ENCODE measurements at regions of chr11 and their contacts with region 1.

Region 1: DNA sequence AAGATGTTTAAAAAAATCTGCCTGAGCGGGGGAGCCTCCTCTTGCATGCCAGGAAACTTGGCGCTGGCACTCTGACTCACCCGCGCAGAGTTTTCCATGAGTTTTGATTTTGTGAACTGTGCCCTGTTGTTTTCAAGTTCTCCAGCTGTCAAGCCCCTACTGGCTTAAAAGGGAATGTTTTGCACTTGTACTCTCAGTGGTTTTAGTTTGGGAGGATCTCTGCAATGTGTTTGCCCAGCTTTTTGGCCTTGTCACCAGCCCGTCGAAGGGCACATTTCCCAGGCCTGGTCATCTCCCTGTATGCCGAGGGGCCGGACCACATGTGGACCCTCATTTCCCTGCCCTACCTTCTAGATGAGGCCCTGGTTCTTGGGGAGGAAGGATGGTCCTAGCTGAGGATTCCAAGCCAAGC is 12.2 kb downstream of the MRGPRF start:
- DNase-seq: peak; percentile 91

Region 2: GRCh38 chr11:68903288-68904247 is 97.3 kb before region 1 on chr11 and contains the starts of genes IGHMBP2 and MRPL21:
- intact Hi-C with region 1: loop called in 1 of 2 experiments (anchors 5 kb)
- DNase-seq: peak; percentile 97
- total RNA-seq, gene IGHMBP2: 18.3 to 18.4 TPM
- total RNA-seq, gene MRPL21: 44.9 to 47.5 TPM

Region 3: DNA sequence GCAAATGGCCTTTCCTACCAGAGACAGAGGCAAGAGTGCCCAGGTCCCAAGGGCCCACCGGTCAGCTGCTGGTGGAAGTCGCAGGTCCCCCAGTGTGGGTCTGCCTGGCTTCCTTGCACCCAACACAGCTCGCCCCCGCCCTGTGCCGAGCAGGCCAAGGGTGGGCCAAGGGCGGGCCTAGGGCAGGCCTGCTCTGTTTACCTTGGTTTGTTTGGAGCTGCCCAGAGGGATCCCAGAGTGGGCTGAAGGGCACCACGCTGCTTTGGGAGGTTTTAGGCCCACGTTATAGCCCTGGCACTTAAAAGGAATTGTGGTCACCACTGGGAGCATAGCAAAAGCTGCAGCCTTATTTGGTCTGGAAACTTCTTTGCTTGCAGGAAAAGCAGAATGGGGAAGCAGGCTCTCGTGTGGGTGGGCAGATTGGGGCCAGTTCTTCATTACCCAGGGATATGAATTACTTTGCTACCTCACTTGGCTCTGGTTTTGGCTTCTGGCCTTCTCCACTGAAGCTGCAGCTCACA is 58.0 kb before region 1 on chr11:
- intact Hi-C with region 1: loop called in 1 of 2 experiments (anchors 5 kb)
- DNase-seq: no peak

Region 4: DNA sequence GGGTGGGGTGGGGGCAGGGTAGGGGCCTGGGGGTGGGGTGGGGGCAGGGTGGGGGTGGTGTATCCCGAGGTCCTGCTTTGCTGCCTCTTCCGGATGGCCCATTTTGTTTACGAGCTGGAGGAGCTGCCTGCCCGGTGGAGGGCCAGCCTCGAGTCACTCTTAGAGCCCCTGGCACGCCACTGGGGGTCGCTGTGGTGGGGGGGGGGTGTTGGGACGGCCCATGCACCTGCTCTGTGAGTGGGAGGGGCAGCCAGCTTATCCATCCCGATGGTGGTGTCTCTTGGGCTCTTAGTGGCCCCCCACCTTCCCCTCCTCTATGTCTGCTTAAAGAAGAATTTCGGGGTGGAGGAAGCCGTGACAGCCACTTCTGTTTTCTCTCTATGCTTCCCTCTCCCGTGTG is 44.7 kb before region 1 on chr11:
- intact Hi-C with region 1: loop called in 1 of 2 experiments (anchors 5 kb)
- DNase-seq: no peak

Region 5: DNA sequence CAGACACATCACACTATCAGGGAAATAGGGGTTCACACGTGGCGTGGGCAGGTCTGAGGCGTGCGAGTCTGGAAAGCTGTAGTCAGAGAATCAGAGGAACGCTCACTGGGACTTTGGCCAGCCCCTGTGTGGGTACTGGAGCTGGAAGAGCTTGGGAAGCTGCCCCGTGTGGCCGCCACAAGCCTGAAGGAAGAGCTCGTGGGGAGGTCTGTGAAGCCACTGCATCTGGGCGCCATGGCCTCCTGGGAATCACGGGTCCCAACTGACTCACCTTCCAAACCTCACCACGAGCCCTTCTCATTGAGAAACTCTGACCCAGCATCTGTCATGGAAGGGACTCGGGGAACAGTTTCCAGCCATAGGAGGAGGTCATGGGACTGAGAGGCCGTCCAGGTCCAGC is 18.1 kb after region 1 on chr11:
- intact Hi-C with region 1: no loop called
- DNase-seq: peak; percentile 87

Region 6: GRCh38 chr11:69186312-69187260 is 185.7 kb after region 1 on chr11:
- intact Hi-C with region 1: no loop called
- DNase-seq: no peak